ENCODE measurements at regions of chr12 and their contacts with region 1.

Region 1: GRCh38 chr12:132414634-132415326 is 75.2 kb upstream of the FBRSL1 start:
- DNase-seq: peak; percentile 65
- ATAC-seq: peak; percentile 97
- H3K4me3 ChIP-seq: 0 out of 4 replicates have a peak overlapping the region, but pooled peaks of 1 of the 2 experiments have one; percentile 28
- H3K27ac ChIP-seq: peak overlapping the region; percentile 3; the same call in 1 of the 2 replicates
- H3K4me1 ChIP-seq: peaks cover 0 to 14% of the 10 kb centered on the region in 2 experiments; a peak in 2 of 4 replicates
- H3K27me3 ChIP-seq: peaks cover 8% of the 10 kb centered on the region; the same call in 1 of the 2 replicates
- CTCF ChIP-seq: peak; percentile 89 to 95 (median 93)
- POLR2A ChIP-seq: no peak
- RAD21 ChIP-seq: peak; percentile 99

Region 2: GRCh38 chr12:132153501-132154340 is 261.1 kb before region 1 on chr12:
- CTCF ChIA-PET with region 1: interaction called, 53 read pairs
- POLR2A ChIA-PET with region 1: interaction called, 5 read pairs
- RAD21 ChIA-PET with region 1: interaction called, 9 to 21 read pairs
- intact Hi-C with region 1: loop called (anchors 1 kb)
- DNase-seq: no peak
- ATAC-seq: peak; percentile 97
- H3K4me3 ChIP-seq: no peak overlapping the region
- H3K27ac ChIP-seq: no peak overlapping the region
- H3K4me1 ChIP-seq: no peaks in the 10 kb centered on the region
- H3K27me3 ChIP-seq: no peaks in the 10 kb centered on the region
- CTCF ChIP-seq: peak; percentile 86 to 94 (median 93)
- POLR2A ChIP-seq: no peak
- RAD21 ChIP-seq: peak; percentile 97

Region 3: GRCh38 chr12:132285991-132286681 is 128.6 kb before region 1 on chr12:
- CTCF ChIA-PET with region 1: interaction called, 18 read pairs
- POLR2A ChIA-PET with region 1: no interaction called
- RAD21 ChIA-PET with region 1: interaction called in 1 of 2 experiments, 3 read pairs
- intact Hi-C with region 1: no loop called
- DNase-seq: no peak
- ATAC-seq: peak; percentile 57
- H3K4me3 ChIP-seq: peak overlapping the region; percentile 39 to 55
- H3K27ac ChIP-seq: peak overlapping the region; percentile 62
- H3K4me1 ChIP-seq: peaks cover 54 to 73% of the 10 kb centered on the region in 2 experiments
- H3K27me3 ChIP-seq: no peaks in the 10 kb centered on the region
- CTCF ChIP-seq: no peak
- POLR2A ChIP-seq: no peak
- RAD21 ChIP-seq: no peak

Region 4: GRCh38 chr12:132379576-132379975 is 35.2 kb before region 1 on chr12:
- CTCF ChIA-PET with region 1: no interaction called
- POLR2A ChIA-PET with region 1: no interaction called
- RAD21 ChIA-PET with region 1: no interaction called
- intact Hi-C with region 1: no loop called
- DNase-seq: no peak
- ATAC-seq: no peak
- H3K4me3 ChIP-seq: no peak overlapping the region
- H3K27ac ChIP-seq: no peak overlapping the region
- H3K4me1 ChIP-seq: peaks cover 0 to 4% of the 10 kb centered on the region in 2 experiments; a peak in 1 of 4 replicates
- H3K27me3 ChIP-seq: peaks cover 41% of the 10 kb centered on the region
- CTCF ChIP-seq: no peak
- POLR2A ChIP-seq: no peak
- RAD21 ChIP-seq: no peak

Region 5: GRCh38 chr12:132523576-132524331 is 109.0 kb after region 1 on chr12:
- CTCF ChIA-PET with region 1: interaction called, 20 read pairs
- POLR2A ChIA-PET with region 1: no interaction called
- RAD21 ChIA-PET with region 1: no interaction called
- intact Hi-C with region 1: loop called (anchors 1 kb)
- DNase-seq: no peak
- ATAC-seq: peak; percentile 88
- H3K4me3 ChIP-seq: no peak overlapping the region
- H3K27ac ChIP-seq: no peak overlapping the region
- H3K4me1 ChIP-seq: peaks cover 0 to 11% of the 10 kb centered on the region in 2 experiments; a peak in 1 of 4 replicates
- H3K27me3 ChIP-seq: no peaks in the 10 kb centered on the region
- CTCF ChIP-seq: peak; percentile 63 to 86 (median 81); a peak in 5 of 6 replicates
- POLR2A ChIP-seq: no peak
- RAD21 ChIP-seq: peak; percentile 69; the same call in 1 of the 2 replicates

Region 6: GRCh38 chr12:132560614-132561426 is 146.0 kb after region 1 on chr12:
- CTCF ChIA-PET with region 1: interaction called, 6 read pairs
- POLR2A ChIA-PET with region 1: no interaction called
- RAD21 ChIA-PET with region 1: interaction called in 1 of 2 experiments, 3 read pairs
- intact Hi-C with region 1: loop called (anchors 1 kb)
- DNase-seq: peak; percentile 75
- ATAC-seq: peak; percentile 80
- H3K4me3 ChIP-seq: peak overlapping the region; percentile 87 to 96
- H3K27ac ChIP-seq: peak overlapping the region; percentile 96
- H3K4me1 ChIP-seq: peaks cover 5 to 18% of the 10 kb centered on the region in 2 experiments; a peak in 2 of 4 replicates
- H3K27me3 ChIP-seq: no peaks in the 10 kb centered on the region
- CTCF ChIP-seq: peak; percentile 86 to 96 (median 95)
- POLR2A ChIP-seq: no peak
- RAD21 ChIP-seq: peak; percentile 65

Region 7: DNA sequence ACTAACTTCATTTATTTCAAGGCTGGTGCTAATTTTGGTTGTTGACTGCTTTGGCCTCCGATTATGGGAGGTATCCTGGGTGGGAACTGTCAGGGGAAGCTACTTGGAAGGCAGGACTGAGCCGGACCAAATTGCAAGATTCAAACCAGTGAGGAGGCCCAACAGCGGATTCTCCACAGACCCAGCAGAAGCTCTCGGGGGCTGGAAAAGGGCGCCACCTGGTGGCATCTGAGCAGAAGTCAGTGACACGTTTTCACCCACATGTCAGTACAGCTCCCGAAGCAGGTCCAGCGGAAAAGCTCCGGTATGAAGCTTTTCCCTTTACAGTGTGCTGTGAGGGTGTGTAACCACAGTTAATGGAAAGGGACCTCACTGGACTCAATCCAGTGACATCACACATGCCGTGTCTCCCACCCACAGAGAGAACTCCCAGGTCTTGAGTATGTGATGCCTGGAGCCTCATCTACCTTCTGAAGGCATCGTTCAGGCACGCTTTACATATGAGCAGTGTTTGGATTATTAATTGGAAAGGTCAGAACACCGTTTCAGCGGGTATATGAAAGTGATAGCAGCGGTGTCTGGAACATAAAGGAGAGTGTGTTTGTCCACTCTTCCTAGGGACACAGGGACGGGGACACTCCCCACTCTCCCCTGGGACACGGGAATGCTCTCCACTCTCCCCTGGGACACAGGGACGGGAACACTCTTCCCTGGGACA is 200.2 kb after region 1 on chr12:
- CTCF ChIA-PET with region 1: interaction called, 46 read pairs
- POLR2A ChIA-PET with region 1: no interaction called
- RAD21 ChIA-PET with region 1: interaction called, 3 to 7 read pairs
- intact Hi-C with region 1: loop called (anchors 1 kb)
- DNase-seq: peak; percentile 76
- ATAC-seq: peak; percentile 96
- H3K4me3 ChIP-seq: no peak overlapping the region
- H3K27ac ChIP-seq: no peak overlapping the region
- H3K4me1 ChIP-seq: peaks cover 0 to 8% of the 10 kb centered on the region in 2 experiments; a peak in 2 of 4 replicates
- H3K27me3 ChIP-seq: no peaks in the 10 kb centered on the region
- CTCF ChIP-seq: peak; percentile 84 to 94 (median 94)
- POLR2A ChIP-seq: no peak
- RAD21 ChIP-seq: peak; percentile 98

Region 8: GRCh38 chr12:132638541-132639418 is 224.0 kb after region 1 on chr12:
- CTCF ChIA-PET with region 1: interaction called, 9 read pairs
- POLR2A ChIA-PET with region 1: no interaction called
- RAD21 ChIA-PET with region 1: no interaction called
- intact Hi-C with region 1: loop called (anchors 1 kb)
- DNase-seq: no peak
- ATAC-seq: peak; percentile 75
- H3K4me3 ChIP-seq: no peak overlapping the region
- H3K27ac ChIP-seq: no peak overlapping the region; the same call in 1 of the 2 replicates
- H3K4me1 ChIP-seq: no peaks in the 10 kb centered on the region
- H3K27me3 ChIP-seq: no peaks in the 10 kb centered on the region
- CTCF ChIP-seq: peak; percentile 45 to 79 (median 77); a peak in 5 of 6 replicates
- POLR2A ChIP-seq: no peak
- RAD21 ChIP-seq: peak; percentile 44; the same call in 1 of the 2 replicates